CD4-positive, alpha-beta memory T cell (primary cell): ENCODE measurements at regions of chr20 and their contacts with region 1.

Region 1: GRCh38 chr20:38962044-38962927 is at the start of gene DHX35:
- DNase-seq: peak; percentile 98 to 99 (median 98)
- H3K4me3 ChIP-seq: peak within 1 kb of the TSS; percentile 86 to 98
- H3K4me3 Mint-ChIP-seq: peak within 1 kb of the TSS; percentile 88 to 98 (median 96)
- H3K27ac ChIP-seq: peak within 1 kb of the TSS; percentile 76
- H3K27ac Mint-ChIP-seq: peak within 1 kb of the TSS; percentile 90 to 98 (median 96)
- H3K4me1 ChIP-seq: peaks cover 24% of the 10 kb centered on the region
- H3K4me1 Mint-ChIP-seq: peaks cover 12 to 31% (median 25%) of the 10 kb centered on the region in 4 donors
- H3K27me3 ChIP-seq: no peaks in the 10 kb centered on the region
- H3K27me3 Mint-ChIP-seq: no peaks in the 10 kb centered on the region
- total RNA-seq, gene DHX35: 11.5 to 11.8 TPM

Region 2: DNA sequence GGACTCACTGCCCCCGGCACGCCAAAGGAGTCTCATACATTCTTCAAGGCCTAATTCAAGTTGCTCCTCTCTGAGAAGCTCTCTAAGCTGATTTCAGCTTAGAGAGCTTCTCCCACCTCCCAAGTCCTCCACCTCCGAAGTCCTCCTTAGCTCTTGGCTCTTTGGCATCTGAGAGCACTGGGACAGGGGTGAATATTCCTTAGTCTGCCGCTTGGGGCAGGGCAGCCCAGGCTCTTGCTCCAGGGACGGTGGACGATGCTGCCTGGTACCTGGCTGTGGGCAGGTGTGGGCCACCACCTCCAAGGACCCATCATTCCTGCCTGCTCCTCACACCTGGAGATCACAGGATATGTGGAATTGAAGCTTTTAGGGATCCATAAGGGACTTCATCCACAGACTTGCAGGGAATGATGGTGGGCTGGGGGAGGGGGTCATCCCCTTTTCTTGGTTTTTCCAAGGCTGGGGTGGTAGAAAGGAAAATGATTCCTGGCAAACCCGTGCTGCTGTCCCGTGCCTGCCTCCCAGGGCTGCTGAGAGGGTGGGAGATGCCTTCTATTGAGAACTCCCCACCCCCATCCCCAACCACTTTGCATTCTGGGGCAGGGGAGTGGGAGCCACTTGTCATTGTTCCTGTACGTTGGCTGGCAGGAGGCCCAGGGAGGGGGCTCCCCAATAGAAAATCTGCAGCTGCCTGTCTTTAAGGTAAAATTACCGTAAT is 303.2 kb before region 1 on chr20:
- CTCF ChIA-PET with region 1: interaction called, 11 read pairs
- POLR2A ChIA-PET with region 1: no interaction called
- intact Hi-C with region 1: no loop called
- DNase-seq: peak in 4 of 5 donors; percentile 22 to 36 (median 26)
- H3K4me3 ChIP-seq: no peak overlapping the region
- H3K4me3 Mint-ChIP-seq: no peak overlapping the region
- H3K27ac ChIP-seq: no peak overlapping the region
- H3K27ac Mint-ChIP-seq: peak overlapping the region in 1 of 7 donors; percentile 53
- H3K4me1 ChIP-seq: no peaks in the 10 kb centered on the region
- H3K4me1 Mint-ChIP-seq: peaks cover 0 to 3% (median under 1%) of the 10 kb centered on the region in 4 donors
- H3K27me3 ChIP-seq: no peaks in the 10 kb centered on the region
- H3K27me3 Mint-ChIP-seq: peaks cover 21 to 39% of the 10 kb centered on the region in 2 donors

Region 3: GRCh38 chr20:38685853-38686473 is 276.3 kb before region 1 on chr20:
- CTCF ChIA-PET with region 1: no interaction called
- POLR2A ChIA-PET with region 1: no interaction called
- intact Hi-C with region 1: no loop called
- DNase-seq: peak; percentile 15 to 44 (median 34)
- H3K4me3 ChIP-seq: no peak overlapping the region
- H3K4me3 Mint-ChIP-seq: no peak overlapping the region
- H3K27ac ChIP-seq: no peak overlapping the region
- H3K27ac Mint-ChIP-seq: no peak overlapping the region
- H3K4me1 ChIP-seq: no peaks in the 10 kb centered on the region
- H3K4me1 Mint-ChIP-seq: no peaks in the 10 kb centered on the region
- H3K27me3 ChIP-seq: peaks cover 16% of the 10 kb centered on the region
- H3K27me3 Mint-ChIP-seq: peaks cover 34 to 58% of the 10 kb centered on the region in 2 donors

Region 4: GRCh38 chr20:38730989-38731737 is 231.1 kb before region 1 on chr20:
- CTCF ChIA-PET with region 1: interaction called, 4 read pairs
- POLR2A ChIA-PET with region 1: interaction called, 4 read pairs
- intact Hi-C with region 1: loop called (anchors 1 kb)
- DNase-seq: peak; percentile 66 to 74 (median 71)
- H3K4me3 ChIP-seq: peak overlapping the region; percentile 44 to 75
- H3K4me3 Mint-ChIP-seq: peak overlapping the region; percentile 61 to 85 (median 73)
- H3K27ac ChIP-seq: no peak overlapping the region
- H3K27ac Mint-ChIP-seq: peak overlapping the region in 5 of 7 donors; percentile 11 to 94 (median 68)
- H3K4me1 ChIP-seq: peaks cover 46% of the 10 kb centered on the region
- H3K4me1 Mint-ChIP-seq: peaks cover 33 to 52% (median 44%) of the 10 kb centered on the region in 4 donors
- H3K27me3 ChIP-seq: peaks cover 74% of the 10 kb centered on the region
- H3K27me3 Mint-ChIP-seq: peaks cover 67 to 85% of the 10 kb centered on the region in 2 donors

Region 5: GRCh38 chr20:38926142-38926933 is 35.9 kb before region 1 on chr20 and contains the start of gene FAM83D:
- CTCF ChIA-PET with region 1: interaction called, 25 read pairs
- POLR2A ChIA-PET with region 1: interaction called, 23 read pairs
- intact Hi-C with region 1: loop called (anchors 1 kb)
- DNase-seq: peak; percentile 93 to 96 (median 95)
- H3K4me3 ChIP-seq: peak within 1 kb of the TSS; percentile 57 to 70
- H3K4me3 Mint-ChIP-seq: peak within 1 kb of the TSS; percentile 81 to 87 (median 82)
- H3K27ac ChIP-seq: peak within 1 kb of the TSS; percentile 51
- H3K27ac Mint-ChIP-seq: peak within 1 kb of the TSS; percentile 32 to 93 (median 66)
- H3K4me1 ChIP-seq: peaks cover 33% of the 10 kb centered on the region
- H3K4me1 Mint-ChIP-seq: peaks cover 21 to 37% (median 27%) of the 10 kb centered on the region in 4 donors
- H3K27me3 ChIP-seq: no peaks in the 10 kb centered on the region
- H3K27me3 Mint-ChIP-seq: no peaks in the 10 kb centered on the region
- total RNA-seq, gene FAM83D: 1.4 to 1.5 TPM